Natural killer cell (primary cell): ENCODE measurements at regions of chr11 and their contacts with region 1.

Region 1: GRCh38 chr11:116732271-116733042 is 40.3 kb downstream of the BUD13 start:
- DNase-seq: peak; percentile 44 to 77
- ATAC-seq: peak; percentile 82 to 99 (median 97)
- H3K4me3 ChIP-seq: no peak overlapping the region
- H3K4me3 Mint-ChIP-seq: no peak overlapping the region
- H3K27ac ChIP-seq: no peak overlapping the region
- H3K27ac Mint-ChIP-seq: peak overlapping the region in 1 of 2 donors; percentile 35
- H3K4me1 ChIP-seq: peaks cover 7% of the 10 kb centered on the region
- H3K4me1 Mint-ChIP-seq: peaks cover 12 to 16% of the 10 kb centered on the region in 2 donors
- H3K27me3 ChIP-seq: no peaks in the 10 kb centered on the region
- H3K27me3 Mint-ChIP-seq: peaks cover 0 to 5% of the 10 kb centered on the region in 2 donors
- CTCF ChIP-seq: peak; percentile 77

Region 2: DNA sequence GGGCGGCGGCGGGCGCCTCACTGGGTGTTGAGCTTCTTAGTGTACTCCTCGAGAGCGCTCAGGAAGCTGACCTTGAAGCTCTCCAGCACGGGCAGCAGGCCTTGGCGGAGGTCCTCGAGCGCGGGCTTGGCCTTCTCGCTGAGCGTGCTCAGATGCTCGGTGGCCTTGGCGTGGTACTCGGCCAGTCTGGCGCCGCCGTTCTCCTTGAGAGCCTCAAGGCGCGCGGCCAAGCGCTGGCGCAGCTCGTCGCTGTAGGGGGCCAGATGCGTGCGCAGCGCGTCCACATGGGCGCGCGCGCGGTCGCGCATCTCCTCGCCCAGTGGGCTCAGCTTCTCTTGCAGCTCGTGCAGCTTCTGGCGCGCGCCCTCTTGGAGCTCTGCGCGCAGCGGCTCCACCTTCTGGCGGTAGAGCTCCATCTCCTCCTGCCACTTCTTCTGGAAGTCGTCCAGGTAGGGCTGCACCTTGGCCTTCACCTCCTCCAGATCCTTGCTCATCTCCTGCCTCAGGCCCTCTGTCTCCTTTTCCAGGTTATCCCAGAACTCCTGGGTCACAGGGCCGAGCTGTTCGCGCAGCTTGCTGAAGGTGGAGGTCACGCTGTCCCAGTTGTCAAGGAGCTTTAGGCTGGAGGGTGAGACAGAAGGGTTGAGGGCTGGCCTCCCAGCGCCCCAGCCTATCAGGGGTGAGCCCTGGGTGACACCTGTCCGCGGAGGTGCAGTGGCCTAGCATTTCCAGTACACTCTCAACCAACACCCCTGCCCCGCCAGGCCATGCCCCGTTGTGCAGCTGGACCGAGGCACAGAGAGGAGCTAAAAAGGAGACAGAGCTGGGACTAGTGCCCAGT is 103.6 kb after region 1 on chr11:
- intact Hi-C with region 1: loop called (anchors 5 kb)
- DNase-seq: peak; percentile 75 to 91
- ATAC-seq: peak; percentile 92 to 97 (median 96)
- H3K4me3 ChIP-seq: peak overlapping the region; percentile 66
- H3K4me3 Mint-ChIP-seq: peak overlapping the region; percentile 84
- H3K27ac ChIP-seq: peak overlapping the region; percentile 52
- H3K27ac Mint-ChIP-seq: peak overlapping the region; percentile 46 to 82
- H3K4me1 ChIP-seq: peaks cover 19% of the 10 kb centered on the region
- H3K4me1 Mint-ChIP-seq: peaks cover 17 to 18% of the 10 kb centered on the region in 2 donors
- H3K27me3 ChIP-seq: no peaks in the 10 kb centered on the region
- H3K27me3 Mint-ChIP-seq: peaks cover 0 to 2% of the 10 kb centered on the region in 2 donors
- CTCF ChIP-seq: peak; percentile 63

Region 3: GRCh38 chr11:117107701-117108590 is 375.5 kb after region 1 on chr11:
- intact Hi-C with region 1: loop called (anchors 1 kb)
- DNase-seq: no peak
- ATAC-seq: no peak
- H3K4me3 ChIP-seq: no peak overlapping the region
- H3K4me3 Mint-ChIP-seq: no peak overlapping the region
- H3K27ac ChIP-seq: no peak overlapping the region
- H3K27ac Mint-ChIP-seq: no peak overlapping the region
- H3K4me1 ChIP-seq: no peaks in the 10 kb centered on the region
- H3K4me1 Mint-ChIP-seq: no peaks in the 10 kb centered on the region
- H3K27me3 ChIP-seq: peaks cover 2% of the 10 kb centered on the region
- H3K27me3 Mint-ChIP-seq: no peaks in the 10 kb centered on the region
- CTCF ChIP-seq: no peak

Region 4: DNA sequence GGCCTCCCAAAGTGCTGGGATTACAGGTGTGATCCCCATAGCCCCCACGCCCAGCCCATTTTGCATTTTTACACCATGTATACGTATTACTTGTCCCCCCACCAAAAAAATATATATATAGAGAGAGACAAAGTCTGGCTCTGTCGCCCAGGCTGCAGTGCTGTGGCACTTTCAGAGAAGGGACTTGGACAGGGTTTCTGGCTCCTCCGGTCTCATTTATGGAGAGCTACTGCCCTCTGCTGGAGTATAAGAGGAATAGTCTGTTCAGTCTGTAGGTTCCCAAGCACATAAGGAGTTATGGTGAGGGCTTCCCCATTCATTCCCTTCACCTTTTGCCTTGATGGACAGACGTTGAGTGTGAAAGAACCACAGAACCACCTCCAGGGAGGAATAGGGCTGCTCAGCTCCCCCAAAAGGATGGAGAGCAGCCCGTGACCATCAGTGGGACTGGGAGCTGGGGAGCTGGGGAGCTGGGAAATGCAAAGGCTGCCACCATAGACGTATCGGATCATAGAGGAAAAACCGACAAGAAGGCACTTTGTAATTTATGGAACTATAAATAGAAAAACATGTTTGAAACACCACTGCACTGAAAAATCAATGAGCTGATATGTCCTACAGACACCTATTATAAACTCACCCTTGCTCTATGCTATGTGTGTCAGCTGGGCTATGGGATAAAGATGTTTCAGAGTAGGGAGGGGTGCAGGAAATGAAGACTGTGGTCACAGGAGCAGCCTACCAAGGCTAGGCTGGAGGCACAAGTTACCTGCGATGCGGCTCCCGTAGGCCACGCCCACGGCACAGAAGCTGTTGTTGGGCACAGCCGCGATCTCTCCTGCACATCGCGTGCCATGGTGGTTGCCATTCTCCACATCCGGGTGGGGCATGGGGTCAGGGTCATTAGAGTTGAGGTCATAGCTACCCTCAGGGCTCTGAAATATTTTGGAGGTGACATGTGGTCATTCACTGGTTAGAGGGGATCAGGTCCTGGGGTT is 494.2 kb after region 1 on chr11:
- intact Hi-C with region 1: loop called (anchors 5 kb)
- DNase-seq: peak in 1 of 2 donors; percentile 88
- ATAC-seq: peak; percentile 68 to 79 (median 68)
- H3K4me3 ChIP-seq: no peak overlapping the region
- H3K4me3 Mint-ChIP-seq: peak overlapping the region; percentile 4
- H3K27ac ChIP-seq: no peak overlapping the region
- H3K27ac Mint-ChIP-seq: peak overlapping the region; percentile 64 to 75
- H3K4me1 ChIP-seq: peaks cover 33% of the 10 kb centered on the region
- H3K4me1 Mint-ChIP-seq: peaks cover 35 to 52% of the 10 kb centered on the region in 2 donors
- H3K27me3 ChIP-seq: no peaks in the 10 kb centered on the region
- H3K27me3 Mint-ChIP-seq: no peaks in the 10 kb centered on the region
- CTCF ChIP-seq: peak; percentile 73